Right lobe of liver (tissue), 6 donors: ENCODE measurements at regions of chr1 and their contacts with region 1.

Region 1: GRCh38 chr1:15598436-15598835 is 13.6 kb upstream of the AGMAT start:
- DNase-seq: no peak
- ATAC-seq: no peak
- H3K4me3 ChIP-seq: no peak overlapping the region
- H3K27ac ChIP-seq: no peak overlapping the region
- H3K4me1 ChIP-seq: peaks cover 0 to 13% (median 0%) of the 10 kb centered on the region in 4 donors
- H3K27me3 ChIP-seq: no peaks in the 10 kb centered on the region
- CTCF ChIP-seq: no peak
- POLR2A ChIP-seq: no peak

Region 2: GRCh38 chr1:15526490-15527339 is 71.7 kb before region 1 on chr1 and contains the start of gene DNAJC16:
- intact Hi-C with region 1: no loop called
- DNase-seq: peak; percentile 98 to 100 (median 99)
- ATAC-seq: peak; percentile 56 to 72 (median 65)
- H3K4me3 ChIP-seq: peak within 1 kb of the TSS; percentile 71 to 88 (median 77)
- H3K27ac ChIP-seq: peak within 1 kb of the TSS; percentile 72 to 94 (median 85)
- H3K4me1 ChIP-seq: peaks cover 0 to 18% (median 12%) of the 10 kb centered on the region in 4 donors
- H3K27me3 ChIP-seq: no peaks in the 10 kb centered on the region
- CTCF ChIP-seq: peak in 3 of 4 donors; percentile 18 to 36 (median 34)
- POLR2A ChIP-seq: peak; percentile 88
- total RNA-seq, gene DNAJC16: 8.4 to 15.0 (median 11.9) TPM

Region 3: DNA sequence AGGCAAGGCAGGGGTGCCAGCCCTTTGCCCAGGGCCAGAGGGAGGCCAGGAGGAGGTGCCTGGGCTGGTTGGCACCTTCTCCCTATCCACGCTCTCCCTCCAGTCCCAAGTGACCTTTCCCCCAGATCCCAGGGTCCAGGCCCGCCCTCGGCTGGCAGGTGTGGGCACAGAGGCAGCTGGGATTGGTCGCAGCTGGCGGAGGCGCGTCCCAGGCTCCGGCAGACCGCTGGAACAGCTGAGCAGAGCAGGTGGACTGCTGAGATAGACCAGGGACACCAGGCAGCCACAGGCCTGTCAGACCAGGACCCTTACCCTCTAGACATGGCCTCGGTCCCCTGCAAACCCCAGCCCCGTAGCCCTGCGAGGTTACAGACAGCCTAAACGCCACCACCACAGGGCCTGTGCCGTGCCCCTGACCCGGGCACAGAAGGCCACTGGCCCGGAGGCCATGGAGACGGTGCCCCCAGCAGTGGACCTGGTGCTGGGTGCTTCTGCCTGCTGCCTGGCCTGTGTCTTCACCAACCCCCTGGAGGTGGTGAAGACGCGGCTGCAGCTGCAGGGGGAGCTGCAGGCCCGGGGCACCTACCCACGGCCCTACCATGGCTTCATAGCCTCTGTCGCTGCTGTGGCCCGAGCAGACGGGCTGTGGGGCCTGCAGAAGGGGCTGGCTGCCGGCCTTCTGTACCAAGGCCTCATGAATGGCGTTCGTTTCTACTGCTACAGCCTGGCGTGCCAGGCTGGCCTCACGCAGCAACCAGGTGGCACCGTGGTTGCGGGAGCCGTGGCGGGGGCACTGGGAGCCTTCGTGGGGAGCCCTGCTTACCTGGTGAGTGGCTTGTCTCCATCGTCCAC is 137.8 kb after region 1 on chr1 and contains the start of gene SLC25A34:
- intact Hi-C with region 1: loop called (anchors 10 kb)
- DNase-seq: peak; percentile 91 to 98 (median 96)
- ATAC-seq: peak; percentile 87 to 93 (median 90)
- H3K4me3 ChIP-seq: peak within 1 kb of the TSS; percentile 20 to 58 (median 54)
- H3K27ac ChIP-seq: peak within 1 kb of the TSS in 2 of 3 donors; percentile 44 to 85
- H3K4me1 ChIP-seq: peaks cover 0 to 31% (median 14%) of the 10 kb centered on the region in 4 donors
- H3K27me3 ChIP-seq: no peaks in the 10 kb centered on the region
- CTCF ChIP-seq: no peak
- POLR2A ChIP-seq: peak; percentile 77
- total RNA-seq, gene SLC25A34: 0.69 to 11.6 (median 3.2) TPM